ENCODE measurements at regions of chr3 and their contacts with region 1.

Region 1: GRCh38 chr3:66971891-66972551 is 26.1 kb upstream of the KBTBD8 start:
- DNase-seq: no peak
- H3K4me3 ChIP-seq: peak overlapping the region; percentile 34
- H3K27me3 ChIP-seq: peaks cover 2% of the 10 kb centered on the region
- CTCF ChIP-seq: peak; percentile 91

Region 2: GRCh38 chr3:66261355-66261754 is 710.7 kb before region 1 on chr3:
- CTCF ChIA-PET with region 1: no interaction called
- POLR2A ChIA-PET with region 1: no interaction called
- DNase-seq: no peak
- H3K4me3 ChIP-seq: no peak overlapping the region
- H3K27me3 ChIP-seq: no peaks in the 10 kb centered on the region
- CTCF ChIP-seq: no peak

Region 3: DNA sequence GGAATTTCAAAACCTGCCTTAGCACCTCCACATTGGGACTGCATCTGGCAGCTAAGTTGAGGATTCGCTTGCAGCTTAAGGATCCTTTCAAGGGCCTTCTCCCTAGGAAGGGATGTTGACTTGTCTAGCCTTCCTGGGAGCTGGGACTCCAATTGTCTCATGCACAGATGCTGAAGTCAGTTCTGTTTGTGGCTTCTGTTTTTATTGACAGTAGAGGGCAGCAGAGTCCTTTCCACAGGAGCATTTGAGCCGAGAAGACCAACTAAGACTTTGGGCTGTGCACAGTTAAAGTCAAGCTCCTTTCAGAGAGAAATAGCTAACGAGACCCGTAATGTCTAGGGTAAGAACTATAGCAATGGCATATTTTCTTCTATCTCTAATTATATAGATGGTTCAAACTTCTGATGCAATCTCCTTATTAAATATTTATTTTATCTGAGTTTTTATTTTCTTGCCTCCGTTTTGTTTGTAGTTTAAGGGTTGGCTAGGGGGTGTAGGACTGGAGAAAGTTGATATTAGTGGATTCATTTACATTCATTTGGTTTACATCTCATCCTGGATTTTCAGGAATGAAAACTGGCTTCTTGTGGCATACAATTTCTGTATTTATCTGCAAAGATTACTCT is 33.6 kb before region 1 on chr3:
- CTCF ChIA-PET with region 1: interaction called, 23 read pairs
- POLR2A ChIA-PET with region 1: no interaction called
- DNase-seq: peak; percentile 6
- H3K4me3 ChIP-seq: no peak overlapping the region
- H3K27me3 ChIP-seq: no peaks in the 10 kb centered on the region; the same call in 1 of the 2 replicates
- CTCF ChIP-seq: peak; percentile 78

Region 4: GRCh38 chr3:66989860-66990665 is 18.0 kb after region 1 on chr3:
- CTCF ChIA-PET with region 1: interaction called, 19 read pairs
- POLR2A ChIA-PET with region 1: no interaction called
- DNase-seq: no peak
- H3K4me3 ChIP-seq: no peak overlapping the region
- H3K27me3 ChIP-seq: 0 out of 2 replicates have a peak, but pooled peaks cover 1% of the 10 kb centered on the region
- CTCF ChIP-seq: 0 out of 2 replicates have a peak, but pooled peaks have one; percentile 6

Region 5: GRCh38 chr3:67044955-67045354 is 72.9 kb after region 1 on chr3:
- CTCF ChIA-PET with region 1: no interaction called
- POLR2A ChIA-PET with region 1: no interaction called
- DNase-seq: no peak
- H3K4me3 ChIP-seq: no peak overlapping the region
- H3K27me3 ChIP-seq: no peaks in the 10 kb centered on the region
- CTCF ChIP-seq: no peak

Region 6: GRCh38 chr3:67113802-67114407 is 141.9 kb after region 1 on chr3:
- CTCF ChIA-PET with region 1: interaction called, 10 read pairs
- POLR2A ChIA-PET with region 1: no interaction called
- DNase-seq: peak; percentile 36
- H3K4me3 ChIP-seq: no peak overlapping the region
- H3K27me3 ChIP-seq: no peaks in the 10 kb centered on the region
- CTCF ChIP-seq: peak; percentile 95

Region 7: DNA sequence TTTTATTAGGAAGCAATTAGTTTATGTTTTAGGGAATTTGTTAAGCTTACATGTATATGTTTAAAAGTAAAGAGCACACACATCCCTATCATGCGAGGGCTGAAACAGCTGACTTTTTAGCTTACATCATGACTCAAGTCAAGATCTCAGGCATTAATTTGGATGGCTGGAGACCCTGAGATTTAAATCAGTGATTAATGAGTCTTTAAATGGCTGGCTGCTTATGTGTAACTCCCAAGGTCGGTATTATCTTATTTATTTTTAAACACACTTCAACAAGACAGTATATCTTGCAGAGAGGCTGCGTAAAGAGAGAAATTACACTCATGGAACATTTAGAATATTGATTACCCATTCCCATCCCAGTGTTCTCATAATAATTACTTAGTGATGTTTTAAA is 195.5 kb after region 1 on chr3:
- CTCF ChIA-PET with region 1: no interaction called
- POLR2A ChIA-PET with region 1: no interaction called
- DNase-seq: no peak
- H3K4me3 ChIP-seq: no peak overlapping the region
- H3K27me3 ChIP-seq: no peaks in the 10 kb centered on the region
- CTCF ChIP-seq: no peak

Region 8: DNA sequence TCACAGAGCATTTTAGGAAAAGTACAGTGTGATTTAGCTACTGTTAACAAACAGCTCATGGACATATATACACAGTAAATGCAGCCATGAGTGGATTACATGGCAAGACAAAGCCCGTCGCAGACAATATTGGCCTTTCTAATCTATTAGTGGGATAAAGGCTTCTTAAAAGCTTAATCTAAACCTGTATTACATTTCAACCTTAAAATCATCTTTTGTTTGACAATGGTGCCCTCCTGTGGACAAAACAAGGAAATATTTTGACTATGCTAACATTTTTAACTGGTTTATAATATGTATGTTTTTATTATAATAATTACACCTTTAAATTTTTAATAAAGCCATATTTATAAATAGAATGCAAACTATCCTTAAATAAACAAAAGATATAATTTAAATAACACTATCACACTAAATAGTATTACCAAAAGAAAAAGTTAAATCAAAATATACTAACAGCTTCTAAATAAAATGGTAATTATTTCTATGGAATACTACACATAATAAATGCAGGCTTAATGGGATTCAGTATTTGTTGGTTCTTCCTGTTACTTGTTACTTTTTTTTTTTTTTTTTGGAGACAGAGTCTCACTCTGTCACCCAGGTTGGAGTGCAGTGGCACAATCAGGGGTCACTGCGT is 1921.7 kb after region 1 on chr3:
- CTCF ChIA-PET with region 1: interaction called, 14 read pairs
- POLR2A ChIA-PET with region 1: no interaction called
- DNase-seq: no peak
- H3K4me3 ChIP-seq: no peak overlapping the region
- H3K27me3 ChIP-seq: no peaks in the 10 kb centered on the region
- CTCF ChIP-seq: peak; percentile 34; the same call in 1 of the 2 replicates

Measured in BJ (cell line).